ENCODE measurements at regions of chr18 and their contacts with region 1.

Region 1: GRCh38 chr18:43793910-43794309 is 516.6 kb upstream of the SYT4 start:
- DNase-seq: no peak
- H3K4me3 ChIP-seq: no peak overlapping the region
- H3K27ac ChIP-seq: no peak overlapping the region
- H3K4me1 ChIP-seq: no peaks in the 10 kb centered on the region; the same call in 1 of the 2 replicates
- H3K27me3 ChIP-seq: no peaks in the 10 kb centered on the region
- CTCF ChIP-seq: no peak

Region 2: GRCh38 chr18:43705850-43706249 is 88.1 kb before region 1 on chr18:
- CTCF ChIA-PET with region 1: no interaction called
- POLR2A ChIA-PET with region 1: no interaction called
- intact Hi-C with region 1: no loop called
- DNase-seq: no peak
- H3K4me3 ChIP-seq: no peak overlapping the region
- H3K27ac ChIP-seq: no peak overlapping the region
- H3K4me1 ChIP-seq: no peaks in the 10 kb centered on the region
- H3K27me3 ChIP-seq: no peaks in the 10 kb centered on the region
- CTCF ChIP-seq: no peak

Region 3: DNA sequence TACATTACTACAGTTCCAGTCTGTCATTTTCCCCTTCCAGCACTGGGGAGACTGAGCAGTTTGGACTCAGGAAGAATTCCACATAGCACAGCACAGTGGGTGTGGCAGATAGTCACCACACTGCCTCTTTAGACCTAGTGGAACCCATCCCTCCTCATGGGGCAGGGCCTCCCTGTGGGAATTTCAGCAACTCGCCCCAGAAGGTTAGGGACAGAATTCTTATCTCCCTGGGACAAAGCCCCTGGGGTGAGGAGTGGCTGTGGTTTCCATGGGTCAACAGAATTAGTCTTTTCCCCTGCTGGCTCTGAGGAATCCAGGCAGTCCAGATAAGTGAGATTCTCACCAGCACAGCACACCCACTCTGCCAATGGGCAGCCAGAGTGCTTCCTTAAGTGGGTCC is 74.6 kb before region 1 on chr18:
- CTCF ChIA-PET with region 1: no interaction called
- POLR2A ChIA-PET with region 1: no interaction called
- intact Hi-C with region 1: no loop called
- DNase-seq: peak; percentile 88 to 90
- H3K4me3 ChIP-seq: no peak overlapping the region
- H3K27ac ChIP-seq: peak overlapping the region; percentile 67
- H3K4me1 ChIP-seq: peaks cover 19% of the 10 kb centered on the region
- H3K27me3 ChIP-seq: no peaks in the 10 kb centered on the region
- CTCF ChIP-seq: no peak

Region 4: DNA sequence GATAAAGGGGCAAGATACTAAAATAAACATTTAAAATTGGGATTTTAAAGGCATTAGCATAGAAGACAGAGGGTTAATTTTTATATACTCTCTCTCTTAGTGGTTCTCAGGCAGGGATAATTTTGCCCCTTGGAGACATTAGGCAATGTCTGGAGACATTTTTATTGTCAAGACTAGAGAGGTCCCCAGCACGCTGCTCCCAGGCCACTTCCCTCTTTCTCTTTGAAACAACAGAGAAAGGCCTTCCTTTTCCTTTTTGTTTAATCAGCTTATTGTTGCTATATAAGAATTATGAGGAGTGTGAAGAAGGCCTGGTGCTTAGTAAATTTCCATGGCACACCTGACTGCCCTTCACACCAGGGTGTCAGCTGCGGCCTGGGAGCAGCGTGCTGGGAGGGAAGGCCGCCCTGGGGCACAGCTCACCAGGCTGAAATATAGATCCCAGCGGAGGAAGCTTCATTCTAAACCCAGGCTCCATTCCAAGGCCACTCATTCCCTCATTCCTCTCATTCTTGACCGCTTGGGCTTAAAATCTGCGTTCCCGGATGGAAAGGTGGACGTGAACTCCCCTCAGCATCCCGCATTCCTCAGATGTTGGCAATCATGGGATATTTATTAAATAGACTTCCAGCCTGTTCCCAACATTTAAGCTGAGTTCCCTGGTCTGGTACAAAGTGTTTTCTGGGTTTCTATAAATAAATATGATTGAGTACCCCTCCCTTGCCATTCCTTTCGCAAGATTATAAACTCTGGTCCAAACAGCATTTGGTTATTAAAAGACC is 1843.8 kb after region 1 on chr18:
- CTCF ChIA-PET with region 1: no interaction called
- POLR2A ChIA-PET with region 1: no interaction called
- intact Hi-C with region 1: loop called (anchors 10 kb)
- DNase-seq: no peak
- H3K4me3 ChIP-seq: no peak overlapping the region
- H3K27ac ChIP-seq: no peak overlapping the region
- H3K4me1 ChIP-seq: no peaks in the 10 kb centered on the region
- H3K27me3 ChIP-seq: peaks cover 33% of the 10 kb centered on the region
- CTCF ChIP-seq: no peak

Measured in PC-9 (cell line).